Posterior vena cava (tissue), 2 donors: ENCODE measurements at regions of chr16 and their contacts with region 1.

Region 1: DNA sequence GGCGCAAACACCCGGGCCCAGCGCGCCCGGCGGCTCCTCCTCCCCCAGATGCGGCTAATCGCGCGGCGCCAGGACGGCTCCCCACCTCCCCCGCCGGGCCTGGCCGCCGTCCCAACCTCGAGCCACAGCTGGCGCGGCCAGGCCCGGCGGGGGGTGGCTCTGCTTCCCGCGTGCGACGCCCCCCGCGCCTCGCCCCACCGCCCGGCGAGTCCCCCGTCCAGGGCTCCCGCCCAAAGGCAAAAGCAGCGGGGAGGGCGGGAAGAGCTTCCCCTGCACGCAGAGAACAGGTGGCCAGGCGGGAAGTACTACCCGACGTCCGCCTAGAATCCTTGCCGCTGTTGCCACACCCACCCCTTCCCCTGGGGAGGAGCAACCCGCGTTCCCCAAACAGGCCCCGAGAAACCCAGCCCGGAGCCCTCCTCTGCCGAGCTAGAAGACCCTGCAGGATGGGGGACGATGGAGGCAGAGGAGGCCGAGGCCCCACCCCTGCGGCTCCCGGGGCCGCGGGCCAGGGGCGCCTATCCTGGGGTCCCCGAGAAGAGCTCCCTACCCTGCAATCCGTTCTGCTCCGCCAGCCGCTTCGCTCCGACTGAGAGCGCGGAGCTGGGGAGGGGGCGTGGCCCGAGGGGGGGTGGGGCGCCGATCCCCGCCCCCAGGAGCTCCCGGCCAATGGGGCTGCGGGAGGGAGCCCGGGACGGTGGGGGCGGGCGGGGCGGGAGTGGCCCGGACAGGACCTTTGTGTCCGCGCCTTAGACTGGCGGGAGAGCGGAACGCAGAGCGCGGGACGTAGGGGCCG is at the start of gene CARHSP1:
- DNase-seq: peak; percentile 95
- total RNA-seq, gene CARHSP1: 39.8 to 44.0 TPM

Region 2: GRCh38 chr16:8806272-8806983 is 62.2 kb before region 1 on chr16:
- intact Hi-C with region 1: loop called in 1 of 2 experiments (anchors 10 kb)
- DNase-seq: no peak

Region 3: GRCh38 chr16:8893426-8893825 is 24.8 kb after region 1 on chr16:
- intact Hi-C with region 1: loop called in 1 of 2 experiments (anchors 1 kb)
- DNase-seq: peak; percentile 32

Region 4: GRCh38 chr16:8908810-8909468 is 40.3 kb after region 1 on chr16:
- intact Hi-C with region 1: no loop called
- DNase-seq: no peak

Region 5: GRCh38 chr16:8956265-8957062 is 87.8 kb after region 1 on chr16:
- intact Hi-C with region 1: loop called in 1 of 2 experiments (anchors 1 kb)
- DNase-seq: peak; percentile 73